Dendritic cell treated with granulocyte-macrophage colony-stimulating factor and Interleukin-4, amounts not matched to agents 40 ng/mL and 50 ng/mL, for 4 days (primary cell): ENCODE measurements at regions of chr5 and their contacts with region 1.

Region 1: DNA sequence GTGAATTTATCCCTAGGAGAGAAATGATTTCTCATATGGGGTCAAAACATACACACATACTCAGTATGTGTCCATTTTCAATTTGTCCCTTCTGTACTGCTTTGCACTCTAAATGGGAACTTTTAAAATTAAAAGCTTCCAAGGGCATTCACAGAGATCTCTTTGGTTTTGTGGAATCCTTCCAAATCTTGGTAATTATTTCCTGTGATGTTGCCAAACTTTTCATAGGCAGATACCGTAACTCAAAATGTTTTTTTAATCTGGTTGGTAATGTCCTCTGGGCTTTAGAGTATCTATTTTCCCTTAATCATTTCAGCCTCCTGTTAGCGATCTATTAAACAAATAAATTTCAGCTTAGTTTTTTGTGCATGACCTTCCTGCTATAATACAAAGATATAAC is 282.4 kb downstream of the ARHGEF28 start:
- H3K4me3 Mint-ChIP-seq: no peak overlapping the region
- H3K27ac Mint-ChIP-seq: no peak overlapping the region
- H3K4me1 Mint-ChIP-seq: no peaks in the 10 kb centered on the region
- H3K27me3 Mint-ChIP-seq: peaks cover 2% of the 10 kb centered on the region

Region 2: DNA sequence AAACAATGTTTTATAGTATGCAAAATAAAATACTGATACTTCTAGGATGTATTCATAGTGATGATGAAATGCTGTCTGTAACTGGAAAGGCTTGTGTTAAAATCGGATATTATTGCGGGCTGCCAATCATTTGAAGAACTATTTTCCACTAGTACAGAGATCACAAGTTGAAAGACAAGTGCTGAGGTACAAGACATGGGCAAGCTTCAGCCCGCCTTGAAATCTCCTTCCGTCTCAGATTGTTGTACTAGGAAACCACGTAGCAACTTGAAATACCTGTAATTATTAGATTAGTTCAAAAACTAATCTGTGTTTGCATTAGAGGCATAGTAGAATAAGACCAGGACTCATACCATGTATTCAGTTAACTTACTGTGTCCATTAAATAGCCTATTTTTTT is 64.2 kb before region 1 on chr5:
- intact Hi-C with region 1: no loop called
- H3K4me3 Mint-ChIP-seq: no peak overlapping the region
- H3K27ac Mint-ChIP-seq: no peak overlapping the region
- H3K4me1 Mint-ChIP-seq: no peaks in the 10 kb centered on the region
- H3K27me3 Mint-ChIP-seq: peaks cover 1% of the 10 kb centered on the region

Region 3: GRCh38 chr5:73998489-73998888 is 90.1 kb after region 1 on chr5:
- intact Hi-C with region 1: no loop called
- H3K4me3 Mint-ChIP-seq: no peak overlapping the region
- H3K27ac Mint-ChIP-seq: no peak overlapping the region
- H3K4me1 Mint-ChIP-seq: no peaks in the 10 kb centered on the region
- H3K27me3 Mint-ChIP-seq: peaks cover 13% of the 10 kb centered on the region

Region 4: GRCh38 chr5:74035521-74035981 is 127.2 kb after region 1 on chr5:
- intact Hi-C with region 1: loop called (anchors 5 kb)
- H3K4me3 Mint-ChIP-seq: no peak overlapping the region
- H3K27ac Mint-ChIP-seq: no peak overlapping the region
- H3K4me1 Mint-ChIP-seq: peaks cover 5% of the 10 kb centered on the region
- H3K27me3 Mint-ChIP-seq: no peaks in the 10 kb centered on the region